Aorta (tissue), 5 donors: ENCODE measurements at regions of chr3 and their contacts with region 1.

Region 1: DNA sequence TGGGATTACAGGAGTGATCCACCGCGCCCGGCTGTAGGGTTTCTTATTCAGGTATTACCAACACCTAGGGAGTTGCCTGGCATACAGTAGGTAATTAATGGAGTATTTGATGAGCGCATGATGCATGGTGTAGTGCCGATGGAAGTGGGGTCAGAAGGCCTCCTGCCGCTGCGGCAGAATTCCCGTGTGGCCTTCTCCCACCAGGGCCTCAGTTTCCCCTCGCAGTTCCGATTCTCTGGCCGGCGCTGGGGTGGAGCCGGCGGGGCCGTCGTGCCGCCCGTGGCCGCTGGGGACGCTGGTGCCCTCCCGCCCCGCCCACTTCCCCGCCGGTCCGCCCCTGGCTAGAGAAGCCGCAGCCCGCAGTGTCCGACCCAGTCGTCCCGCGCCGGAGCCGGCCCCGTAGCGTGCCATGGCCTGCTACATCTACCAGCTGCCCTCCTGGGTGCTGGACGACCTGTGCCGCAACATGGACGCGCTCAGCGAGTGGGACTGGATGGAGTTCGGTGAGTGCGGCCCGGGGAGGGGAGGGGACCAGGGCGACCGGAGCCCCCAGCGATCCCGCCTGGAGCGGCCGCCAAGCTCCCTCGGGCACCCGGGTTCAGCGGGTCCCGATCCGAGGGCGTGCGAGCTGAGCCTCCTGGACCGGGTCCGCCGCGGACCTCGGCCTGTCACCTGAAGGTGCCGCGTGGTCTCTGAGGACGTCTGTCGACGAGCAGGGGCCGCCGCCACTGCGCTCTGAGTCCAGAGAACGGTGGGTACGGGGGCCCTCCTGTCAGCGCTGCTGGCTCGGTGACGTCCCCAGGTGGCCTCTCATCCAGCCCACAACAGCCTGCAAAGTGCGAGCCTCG is at the start of gene IRAK2:
- DNase-seq: peak; percentile 87 to 94
- ATAC-seq: peak; percentile 93
- H3K4me3 ChIP-seq: peak within 1 kb of the TSS; percentile 60 to 65
- H3K27ac ChIP-seq: peak within 1 kb of the TSS in 1 of 2 donors; percentile 70
- H3K4me1 ChIP-seq: no peaks in the 10 kb centered on the region
- H3K27me3 ChIP-seq: no peaks in the 10 kb centered on the region
- total RNA-seq, gene IRAK2: 7.1 to 8.3 TPM

Region 2: DNA sequence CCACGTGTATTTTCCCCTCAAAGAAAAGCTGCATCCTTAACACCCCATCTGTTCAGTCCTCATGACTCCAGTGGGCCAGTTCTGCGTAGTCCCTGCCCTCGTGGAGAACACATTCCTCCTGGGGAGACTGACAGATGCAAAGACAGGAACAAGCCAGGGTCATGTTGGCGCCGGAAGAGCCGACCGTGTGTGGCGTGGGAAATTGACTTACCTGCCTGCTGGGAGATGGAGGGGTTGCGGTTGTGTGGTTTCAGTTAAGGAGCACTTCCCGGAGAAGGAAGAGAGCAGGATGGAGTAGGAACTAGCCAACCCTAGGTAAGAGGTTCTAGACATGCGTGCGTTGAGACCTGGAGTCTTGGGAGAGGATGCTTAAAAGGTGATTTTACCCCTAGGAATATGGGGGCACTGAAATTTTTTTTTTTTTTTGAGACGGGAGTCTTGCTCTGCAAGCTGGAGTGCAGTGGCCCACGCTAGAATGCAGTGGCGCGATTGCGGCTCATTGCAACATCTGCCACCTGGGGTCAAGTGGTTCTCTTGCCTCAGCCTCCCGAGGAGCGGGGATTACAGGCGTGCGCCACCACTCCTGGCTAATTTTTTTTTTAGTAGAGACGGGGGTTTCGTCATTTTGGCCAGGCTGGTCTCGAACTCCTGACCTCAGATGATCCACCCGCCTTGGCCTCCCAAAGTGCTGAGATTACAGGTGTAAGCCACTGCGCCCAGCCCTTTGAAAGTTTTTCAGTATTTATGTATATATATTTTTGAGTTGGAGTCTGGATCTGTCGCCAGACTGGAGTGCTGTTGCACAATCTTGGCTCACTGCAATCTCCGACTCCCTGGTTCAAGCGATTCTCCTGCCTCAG is 21.8 kb before region 1 on chr3:
- intact Hi-C with region 1: loop called in 1 of 2 experiments (anchors 2 kb)
- DNase-seq: no peak
- ATAC-seq: no peak
- H3K4me3 ChIP-seq: peak overlapping the region in 1 of 2 donors; percentile 3
- H3K27ac ChIP-seq: no peak overlapping the region
- H3K4me1 ChIP-seq: no peaks in the 10 kb centered on the region
- H3K27me3 ChIP-seq: no peaks in the 10 kb centered on the region

Region 3: DNA sequence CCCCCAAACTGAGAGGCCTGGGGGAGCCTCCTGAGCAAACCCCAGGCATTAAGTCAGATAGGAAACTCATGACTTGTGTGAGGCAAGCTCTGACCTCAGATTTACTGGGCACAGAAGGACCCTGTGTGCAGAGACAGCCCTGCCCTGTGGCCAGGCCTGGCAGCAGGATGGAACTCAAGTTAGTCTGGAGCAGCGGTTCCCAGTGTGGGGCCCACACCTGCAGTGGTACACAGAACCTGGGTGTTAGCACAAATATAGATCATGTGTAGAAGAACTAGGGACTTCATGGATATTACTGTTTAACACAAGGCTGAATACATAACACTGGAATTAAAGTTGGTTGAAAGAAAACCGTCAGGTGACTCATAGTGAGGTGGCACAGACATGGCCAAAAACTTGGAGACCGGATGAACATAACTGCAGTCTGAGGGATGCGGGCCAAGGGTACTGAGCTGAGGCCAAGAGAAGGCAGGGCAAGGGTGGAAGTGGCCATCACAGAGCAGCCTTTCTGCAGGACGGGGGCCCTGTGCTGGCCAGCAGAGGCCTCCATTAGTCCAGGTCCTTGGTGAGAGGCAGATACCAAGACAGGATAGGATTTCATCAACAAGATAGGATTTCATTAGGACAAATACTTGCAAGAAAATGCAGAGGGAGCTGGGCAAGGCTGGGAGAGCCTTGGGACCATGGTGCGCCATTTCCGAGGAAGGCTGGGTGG is 40.8 kb after region 1 on chr3:
- intact Hi-C with region 1: loop called in 1 of 2 experiments (anchors 5 kb)
- DNase-seq: peak; percentile 91 to 93
- ATAC-seq: peak; percentile 82
- H3K4me3 ChIP-seq: no peak overlapping the region
- H3K27ac ChIP-seq: peak overlapping the region; percentile 62 to 79
- H3K4me1 ChIP-seq: peaks cover 0 to 4% of the 10 kb centered on the region in 2 donors
- H3K27me3 ChIP-seq: no peaks in the 10 kb centered on the region

Region 4: GRCh38 chr3:10224784-10225665 is 60.3 kb after region 1 on chr3:
- intact Hi-C with region 1: loop called (anchors 2 to 5 kb)
- DNase-seq: peak; percentile 76 to 85
- ATAC-seq: peak; percentile 90
- H3K4me3 ChIP-seq: no peak overlapping the region
- H3K27ac ChIP-seq: peak overlapping the region in 1 of 2 donors; percentile 32
- H3K4me1 ChIP-seq: no peaks in the 10 kb centered on the region
- H3K27me3 ChIP-seq: no peaks in the 10 kb centered on the region